Stomach (tissue), 19 donors: ENCODE measurements at regions of chr18 and their contacts with region 1.

Region 1: GRCh38 chr18:62437235-62438017 is 85.4 kb upstream of the ZCCHC2 start:
- DNase-seq: peak; percentile 64 to 68
- H3K4me3 ChIP-seq: no peak overlapping the region
- H3K27ac ChIP-seq: peak overlapping the region; percentile 11 to 74 (median 68)
- H3K4me1 ChIP-seq: peaks cover 4 to 31% (median 8%) of the 10 kb centered on the region in 4 donors
- H3K27me3 ChIP-seq: no peaks in the 10 kb centered on the region
- CTCF ChIP-seq: no peak
- EP300 ChIP-seq: no peak
- POLR2A ChIP-seq: no peak

Region 2: DNA sequence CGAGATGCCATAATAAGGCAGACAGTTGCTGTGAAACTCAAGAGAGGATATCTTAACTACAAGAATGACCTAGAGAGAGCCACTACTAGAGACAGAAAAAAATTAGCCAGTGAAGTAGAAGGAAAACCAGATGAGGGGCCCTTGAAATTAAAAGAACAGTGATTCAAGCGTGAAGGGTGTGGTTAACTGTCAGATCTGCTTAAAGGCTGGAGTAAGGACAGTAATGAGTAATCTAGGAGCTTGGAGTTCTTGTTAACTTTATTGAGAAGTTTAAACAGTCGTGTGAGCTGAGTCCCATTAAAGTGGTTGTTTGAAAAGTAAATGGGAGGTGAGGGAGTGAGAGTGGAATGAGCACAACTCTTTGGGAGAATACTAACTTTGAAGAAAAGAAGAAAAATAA is 271.8 kb before region 1 on chr18:
- intact Hi-C with region 1: no loop called
- DNase-seq: no peak
- H3K4me3 ChIP-seq: no peak overlapping the region
- H3K27ac ChIP-seq: no peak overlapping the region
- H3K4me1 ChIP-seq: peaks cover 0 to 1% (median 0%) of the 10 kb centered on the region in 4 donors
- H3K27me3 ChIP-seq: no peaks in the 10 kb centered on the region
- CTCF ChIP-seq: no peak
- EP300 ChIP-seq: no peak
- POLR2A ChIP-seq: no peak

Region 3: DNA sequence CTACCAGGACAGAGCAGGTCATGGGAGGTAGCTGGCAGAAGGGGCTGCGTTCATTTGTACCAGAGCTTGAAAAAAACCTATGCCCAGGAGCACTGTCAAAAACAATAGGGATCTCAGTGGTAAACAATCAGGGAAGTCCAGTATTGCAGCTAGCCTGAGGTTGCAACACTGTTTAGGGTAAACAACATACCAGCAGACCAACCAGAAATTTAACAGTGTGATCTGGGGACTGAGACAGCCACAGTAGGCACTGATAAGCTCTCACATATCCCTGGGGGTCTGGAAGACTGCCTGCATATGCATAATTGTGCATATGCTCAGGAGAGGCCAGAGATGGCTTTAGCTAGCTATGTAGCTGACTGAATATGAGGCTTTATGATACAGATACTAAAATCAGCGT is 73.4 kb after region 1 on chr18:
- intact Hi-C with region 1: loop called (anchors 10 kb)
- DNase-seq: no peak
- H3K4me3 ChIP-seq: no peak overlapping the region
- H3K27ac ChIP-seq: no peak overlapping the region
- H3K4me1 ChIP-seq: peaks cover 2 to 4% (median 3%) of the 10 kb centered on the region in 4 donors
- H3K27me3 ChIP-seq: no peaks in the 10 kb centered on the region
- CTCF ChIP-seq: no peak
- EP300 ChIP-seq: no peak
- POLR2A ChIP-seq: no peak

Region 4: GRCh38 chr18:62862466-62862865 is 425.0 kb after region 1 on chr18:
- intact Hi-C with region 1: no loop called
- DNase-seq: no peak
- H3K4me3 ChIP-seq: no peak overlapping the region
- H3K27ac ChIP-seq: no peak overlapping the region
- H3K4me1 ChIP-seq: peaks cover 0 to 12% (median 2%) of the 10 kb centered on the region in 4 donors
- H3K27me3 ChIP-seq: no peaks in the 10 kb centered on the region
- CTCF ChIP-seq: no peak
- EP300 ChIP-seq: no peak
- POLR2A ChIP-seq: no peak